ENCODE measurements at regions of chr4 and their contacts with region 1.

Region 1: DNA sequence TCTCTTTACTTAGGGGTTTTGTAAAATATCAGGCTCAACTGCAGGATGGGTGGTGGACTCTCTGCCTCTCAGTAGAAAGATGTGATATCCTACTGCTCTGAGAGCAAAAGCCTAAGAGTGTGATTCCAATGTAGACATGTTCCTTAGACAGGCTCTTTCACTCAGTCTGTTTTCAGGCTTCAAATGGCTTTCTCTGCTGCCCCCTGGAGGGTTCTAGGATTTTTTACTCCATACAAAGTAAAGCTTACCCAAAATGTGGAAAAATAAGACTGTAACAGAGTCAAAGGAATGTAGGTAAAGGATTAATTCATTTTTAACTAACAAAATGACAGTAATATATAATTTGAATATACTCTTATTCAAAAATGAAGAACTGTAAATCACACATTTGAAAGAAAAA is 32.1 kb downstream of the ZGRF1 start:
- DNase-seq: peak in 1 of 2 donors; percentile 27
- ATAC-seq: peak; percentile 78

Region 2: GRCh38 chr4:112321776-112322684 is 282.6 kb before region 1 on chr4:
- intact Hi-C with region 1: loop called in 1 of 2 experiments (anchors 5 kb)
- DNase-seq: peak; percentile 28 to 83
- ATAC-seq: peak; percentile 52